AG04450 (cell line): ENCODE measurements at regions of chr19 and their contacts with region 1.

Region 1: GRCh38 chr19:34336781-34337271 is 28.2 kb upstream of the GPI start:
- DNase-seq: no peak
- H3K4me3 ChIP-seq: no peak overlapping the region
- H3K27ac ChIP-seq: no peak overlapping the region
- H3K27me3 ChIP-seq: no peaks in the 10 kb centered on the region
- CTCF ChIP-seq: peak; percentile 73

Region 2: GRCh38 chr19:34260771-34261173 is 76.1 kb before region 1 on chr19:
- CTCF ChIA-PET with region 1: interaction called, 11 read pairs
- POLR2A ChIA-PET with region 1: interaction called, 3 read pairs
- DNase-seq: no peak
- H3K4me3 ChIP-seq: peak overlapping the region; percentile 39; the same call in 1 of the 2 replicates
- H3K27ac ChIP-seq: peak overlapping the region; percentile 77
- H3K27me3 ChIP-seq: no peaks in the 10 kb centered on the region
- CTCF ChIP-seq: no peak

Region 3: GRCh38 chr19:34295103-34295502 is 41.7 kb before region 1 on chr19:
- CTCF ChIA-PET with region 1: no interaction called
- POLR2A ChIA-PET with region 1: no interaction called
- DNase-seq: no peak
- H3K4me3 ChIP-seq: no peak overlapping the region
- H3K27ac ChIP-seq: no peak overlapping the region
- H3K27me3 ChIP-seq: no peaks in the 10 kb centered on the region
- CTCF ChIP-seq: no peak

Region 4: GRCh38 chr19:34308381-34309367 is 28.2 kb before region 1 on chr19:
- CTCF ChIA-PET with region 1: interaction called, 11 read pairs
- POLR2A ChIA-PET with region 1: no interaction called
- DNase-seq: no peak
- H3K4me3 ChIP-seq: no peak overlapping the region
- H3K27ac ChIP-seq: no peak overlapping the region
- H3K27me3 ChIP-seq: no peaks in the 10 kb centered on the region
- CTCF ChIP-seq: no peak